ENCODE measurements at regions of chr1 and their contacts with region 1.

Region 1: GRCh38 chr1:148388260-148389027 is 94.7 kb downstream of the PPIAL4G start:
- DNase-seq: peak; percentile 95
- H3K4me3 Mint-ChIP-seq: peak overlapping the region; percentile 88
- H3K27ac Mint-ChIP-seq: peak overlapping the region; percentile 99
- H3K4me1 Mint-ChIP-seq: peaks cover 39% of the 10 kb centered on the region
- H3K27me3 Mint-ChIP-seq: no peaks in the 10 kb centered on the region

Region 2: DNA sequence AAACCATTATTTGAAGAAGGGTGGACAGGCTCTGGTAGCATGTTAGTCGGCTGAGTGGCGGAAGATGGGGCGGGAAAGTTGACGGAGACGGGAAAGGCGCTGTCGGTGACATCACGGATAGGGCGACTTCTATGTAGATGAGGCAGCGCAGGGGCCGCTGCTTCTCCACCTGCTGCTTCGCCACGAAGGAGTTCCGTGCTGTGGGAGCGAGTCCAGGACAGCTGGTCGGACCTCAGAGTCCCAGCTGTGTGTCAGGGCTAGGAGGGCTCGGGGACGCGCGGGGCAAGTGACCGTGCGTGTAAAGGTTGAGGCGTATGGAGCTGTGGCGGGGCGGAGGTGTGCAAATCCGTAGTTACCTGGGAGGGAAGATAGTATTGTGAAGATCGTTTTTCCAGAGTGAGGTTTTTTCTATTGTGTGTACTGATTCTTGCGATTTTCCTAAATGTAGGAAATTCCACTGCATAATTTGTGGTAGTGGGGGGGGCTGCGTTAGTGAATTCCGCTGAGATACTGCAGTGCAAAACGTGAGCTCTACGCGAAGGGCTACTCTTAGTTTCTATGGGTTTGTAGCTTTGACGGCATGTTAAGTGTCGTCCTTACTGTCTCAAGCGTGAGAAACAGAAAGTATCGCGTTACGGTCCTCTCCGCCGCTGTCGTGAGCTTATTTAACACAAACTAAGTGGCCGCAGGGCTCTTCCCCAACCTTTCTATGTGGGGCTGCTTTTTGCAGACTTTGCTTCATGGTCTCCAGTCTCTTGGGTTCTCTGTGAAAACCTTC is 125.1 kb before region 1 on chr1:
- CTCF ChIA-PET with region 1: no interaction called
- POLR2A ChIA-PET with region 1: interaction called, 18 read pairs
- intact Hi-C with region 1: loop called (anchors 2 kb)
- DNase-seq: peak; percentile 85
- H3K4me3 Mint-ChIP-seq: peak overlapping the region; percentile 80
- H3K27ac Mint-ChIP-seq: peak overlapping the region; percentile 96
- H3K4me1 Mint-ChIP-seq: peaks cover 19% of the 10 kb centered on the region
- H3K27me3 Mint-ChIP-seq: no peaks in the 10 kb centered on the region

Region 3: GRCh38 chr1:148290881-148291280 is 97.6 kb before region 1 on chr1:
- CTCF ChIA-PET with region 1: no interaction called
- POLR2A ChIA-PET with region 1: no interaction called
- intact Hi-C with region 1: no loop called
- DNase-seq: no peak
- H3K4me3 Mint-ChIP-seq: no peak overlapping the region
- H3K27ac Mint-ChIP-seq: no peak overlapping the region
- H3K4me1 Mint-ChIP-seq: peaks cover 6% of the 10 kb centered on the region
- H3K27me3 Mint-ChIP-seq: peaks cover 3% of the 10 kb centered on the region

Region 4: GRCh38 chr1:148362626-148363438 is 25.6 kb before region 1 on chr1:
- CTCF ChIA-PET with region 1: no interaction called
- POLR2A ChIA-PET with region 1: interaction called, 9 read pairs
- intact Hi-C with region 1: loop called (anchors 2 kb)
- DNase-seq: peak; percentile 73
- H3K4me3 Mint-ChIP-seq: peak overlapping the region; percentile 80
- H3K27ac Mint-ChIP-seq: peak overlapping the region; percentile 88
- H3K4me1 Mint-ChIP-seq: peaks cover 50% of the 10 kb centered on the region
- H3K27me3 Mint-ChIP-seq: peaks cover 2% of the 10 kb centered on the region

Region 5: DNA sequence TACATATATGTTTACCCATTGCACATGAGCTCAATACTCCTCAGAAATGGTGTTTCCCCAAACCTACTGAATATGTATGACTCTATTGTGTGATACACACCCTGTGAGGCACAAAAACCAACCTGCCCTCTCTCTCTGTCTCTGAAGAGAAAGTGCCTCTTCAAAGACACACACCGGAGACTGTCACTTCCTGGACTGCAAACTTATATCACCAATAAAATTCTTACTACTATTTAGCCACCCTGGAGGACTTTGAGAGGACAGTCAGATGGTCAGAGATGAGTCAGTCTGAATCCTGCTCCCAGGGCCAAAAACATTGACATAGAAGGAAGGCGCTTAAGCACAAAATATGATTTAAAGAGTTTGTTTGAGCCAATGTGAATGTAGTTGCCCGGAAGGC is 15.7 kb before region 1 on chr1:
- CTCF ChIA-PET with region 1: interaction called, 5 read pairs
- POLR2A ChIA-PET with region 1: interaction called, 35 read pairs
- intact Hi-C with region 1: loop called (anchors 1 kb)
- DNase-seq: peak; percentile 70
- H3K4me3 Mint-ChIP-seq: peak overlapping the region; percentile 62
- H3K27ac Mint-ChIP-seq: peak overlapping the region; percentile 88
- H3K4me1 Mint-ChIP-seq: peaks cover 40% of the 10 kb centered on the region
- H3K27me3 Mint-ChIP-seq: no peaks in the 10 kb centered on the region

Measured in activated CD4-positive, alpha-beta memory T cell treated with anti-CD3 and anti-CD28 coated beads for 36 hours (primary cell).